Caco-2 (cell line): ENCODE measurements at regions of chr6 and their contacts with region 1.

Region 1: DNA sequence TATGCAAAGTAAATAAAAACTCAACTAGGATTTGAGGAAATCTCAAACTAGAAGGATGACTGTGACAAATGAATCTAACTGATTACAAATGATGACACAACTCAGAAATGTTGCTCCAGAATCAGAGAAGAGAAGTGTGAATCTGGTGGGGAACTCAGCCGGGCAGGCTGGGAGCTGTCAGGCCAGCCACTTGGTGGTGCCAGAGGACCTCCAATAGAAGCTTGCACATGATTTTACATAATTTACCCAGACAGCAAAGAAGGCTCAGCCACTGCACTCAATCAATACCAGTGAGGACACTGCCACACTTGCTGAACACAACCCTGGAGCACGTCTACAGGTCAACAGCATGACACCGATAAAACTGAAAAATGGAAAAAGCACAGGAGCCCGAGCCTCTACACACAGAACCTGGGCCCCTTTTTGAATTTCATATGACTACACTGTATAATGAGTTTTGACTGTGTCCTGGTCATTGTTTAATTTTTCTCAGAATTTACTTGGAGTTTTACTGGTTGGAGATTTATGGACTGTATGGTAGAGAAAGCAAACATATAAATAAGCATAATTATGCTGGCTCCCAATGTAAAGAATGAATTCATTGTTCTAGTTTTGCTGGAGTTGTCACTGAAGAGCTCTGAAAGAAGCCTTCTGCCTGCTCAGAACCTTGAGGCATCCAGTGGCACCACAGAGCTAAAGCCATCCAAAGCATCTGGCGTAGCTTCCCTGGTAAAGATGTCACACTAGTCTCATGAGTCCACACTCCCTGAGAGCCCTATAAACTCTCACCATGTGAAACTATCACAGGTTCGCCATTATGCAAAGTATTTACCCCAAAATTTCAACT is 296.5 kb downstream of the THBS2 start:
- DNase-seq: peak; percentile 63 to 76
- H3K4me3 ChIP-seq: no peak overlapping the region
- H3K4me3 Mint-ChIP-seq: no peak overlapping the region
- H3K27ac Mint-ChIP-seq: no peak overlapping the region
- H3K4me1 ChIP-seq: no peaks in the 10 kb centered on the region
- H3K4me1 Mint-ChIP-seq: no peaks in the 10 kb centered on the region
- H3K27me3 ChIP-seq: no peaks in the 10 kb centered on the region
- H3K27me3 Mint-ChIP-seq: peaks cover 7% of the 10 kb centered on the region
- CTCF ChIP-seq: peak; percentile 67 to 81

Region 2: DNA sequence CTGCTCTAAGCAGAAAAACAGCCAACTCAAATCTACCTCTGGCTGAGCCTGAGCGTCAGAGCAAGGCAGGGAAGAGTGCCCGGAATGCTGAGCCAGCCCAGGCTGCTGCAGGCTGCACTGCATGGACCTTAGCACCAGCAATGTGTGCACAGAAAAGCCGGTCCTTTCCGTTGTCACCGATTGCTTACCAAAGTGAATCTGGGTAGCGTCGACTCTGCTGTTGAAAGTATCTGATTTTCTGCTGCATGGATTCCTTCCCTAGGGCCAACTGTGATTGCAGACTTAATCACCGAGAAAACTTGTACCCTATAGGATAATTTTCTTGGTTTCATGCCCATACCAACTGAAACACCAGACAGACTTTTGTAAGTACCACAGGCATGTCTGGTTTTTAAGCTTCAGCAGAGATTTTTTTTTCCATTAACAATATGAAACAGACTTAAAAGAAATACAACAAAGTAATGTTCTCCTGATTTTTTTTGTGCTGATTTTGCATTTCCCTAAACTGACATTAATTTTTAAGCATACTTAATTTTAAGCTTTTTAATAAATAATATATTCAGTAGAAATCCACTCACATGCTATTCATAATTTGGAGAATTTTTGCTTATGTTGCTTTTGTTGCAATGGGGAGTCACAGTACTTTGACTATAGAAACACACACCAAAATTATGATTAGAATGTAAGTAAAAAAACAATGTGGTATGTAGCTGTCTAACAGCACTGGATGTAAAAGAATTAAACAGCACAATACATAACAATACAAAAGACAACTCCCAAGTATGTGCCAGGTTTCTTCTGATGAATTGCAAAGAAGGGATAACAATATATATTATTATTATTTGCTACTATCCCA is 78.5 kb after region 1 on chr6:
- CTCF ChIA-PET with region 1: no interaction called
- POLR2A ChIA-PET with region 1: no interaction called
- intact Hi-C with region 1: no loop called
- DNase-seq: no peak
- H3K4me3 ChIP-seq: no peak overlapping the region
- H3K4me3 Mint-ChIP-seq: no peak overlapping the region
- H3K27ac Mint-ChIP-seq: no peak overlapping the region
- H3K4me1 ChIP-seq: no peaks in the 10 kb centered on the region
- H3K4me1 Mint-ChIP-seq: no peaks in the 10 kb centered on the region
- H3K27me3 ChIP-seq: no peaks in the 10 kb centered on the region
- H3K27me3 Mint-ChIP-seq: peaks cover 8% of the 10 kb centered on the region
- CTCF ChIP-seq: no peak

Region 3: DNA sequence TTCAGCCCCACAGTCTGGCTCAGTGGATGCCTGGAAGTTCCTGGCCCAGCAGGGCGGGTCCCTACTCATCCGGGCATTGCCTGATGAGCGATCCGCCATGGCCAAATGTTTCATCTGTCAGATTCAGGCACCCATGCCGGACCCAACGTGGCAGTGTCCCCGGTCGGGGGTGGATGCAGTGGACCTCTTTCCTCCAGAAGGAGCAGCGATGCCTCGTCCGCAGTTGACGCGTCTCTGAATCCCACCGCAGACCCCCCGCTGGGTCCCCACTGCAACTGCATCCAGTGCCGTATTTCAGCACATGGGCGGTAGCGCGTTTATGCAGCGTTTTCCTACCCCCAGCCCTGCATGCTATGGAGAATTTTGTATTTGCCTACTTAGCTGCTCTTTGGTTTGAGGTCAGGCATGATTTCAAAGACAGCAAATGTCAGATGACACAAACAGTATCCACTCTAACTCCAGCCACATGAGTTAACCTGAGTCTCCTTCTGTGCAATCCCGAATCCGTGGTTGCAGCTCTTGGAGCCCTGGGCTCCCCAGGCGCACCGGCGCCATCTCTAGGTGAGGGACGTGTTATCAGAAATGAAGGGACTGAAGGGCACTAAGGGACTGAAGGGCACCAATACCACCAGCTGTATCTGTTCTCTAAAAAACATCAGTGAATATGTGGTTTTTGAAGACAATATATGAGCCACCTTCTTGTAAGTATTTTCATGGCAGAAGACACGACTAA is 369.1 kb after region 1 on chr6:
- CTCF ChIA-PET with region 1: no interaction called
- POLR2A ChIA-PET with region 1: no interaction called
- intact Hi-C with region 1: loop called (anchors 10 kb)
- DNase-seq: peak in 1 of 2 experiments; percentile 45
- H3K4me3 ChIP-seq: no peak overlapping the region
- H3K4me3 Mint-ChIP-seq: no peak overlapping the region
- H3K27ac Mint-ChIP-seq: no peak overlapping the region
- H3K4me1 ChIP-seq: no peaks in the 10 kb centered on the region
- H3K4me1 Mint-ChIP-seq: no peaks in the 10 kb centered on the region
- H3K27me3 ChIP-seq: no peaks in the 10 kb centered on the region
- H3K27me3 Mint-ChIP-seq: peaks cover 7% of the 10 kb centered on the region
- CTCF ChIP-seq: peak in 1 of 2 experiments; percentile 15

Region 4: DNA sequence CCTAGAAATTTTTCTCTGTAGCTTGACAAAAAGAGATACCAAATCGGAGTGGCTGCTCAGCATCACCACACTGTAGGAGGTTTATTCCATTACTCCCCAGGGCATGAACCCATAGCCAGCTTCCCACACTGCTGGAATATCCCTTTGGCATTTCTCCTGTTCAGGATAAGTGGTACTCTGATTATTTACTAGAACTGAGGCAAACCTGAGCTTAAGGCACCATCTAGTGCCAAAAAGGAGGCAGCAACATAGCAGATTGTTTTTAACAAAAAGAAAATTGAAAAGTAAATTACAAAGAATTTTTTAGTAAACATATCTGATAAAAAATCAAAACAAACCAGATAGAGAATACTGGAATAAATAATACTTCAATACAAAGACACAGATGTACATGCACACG is 563.0 kb after region 1 on chr6:
- CTCF ChIA-PET with region 1: no interaction called
- POLR2A ChIA-PET with region 1: no interaction called
- intact Hi-C with region 1: loop called (anchors 1 kb)
- DNase-seq: no peak
- H3K4me3 ChIP-seq: no peak overlapping the region
- H3K4me3 Mint-ChIP-seq: no peak overlapping the region
- H3K27ac Mint-ChIP-seq: no peak overlapping the region
- H3K4me1 ChIP-seq: no peaks in the 10 kb centered on the region
- H3K4me1 Mint-ChIP-seq: no peaks in the 10 kb centered on the region
- H3K27me3 ChIP-seq: no peaks in the 10 kb centered on the region
- H3K27me3 Mint-ChIP-seq: no peaks in the 10 kb centered on the region
- CTCF ChIP-seq: no peak

Region 5: GRCh38 chr6:170295510-170296422 is 1338.7 kb after region 1 on chr6:
- CTCF ChIA-PET with region 1: no interaction called
- POLR2A ChIA-PET with region 1: no interaction called
- intact Hi-C with region 1: loop called (anchors 5 kb)
- DNase-seq: peak in 1 of 2 experiments; percentile 53
- H3K4me3 ChIP-seq: peak overlapping the region; percentile 64
- H3K4me3 Mint-ChIP-seq: peak overlapping the region; percentile 78
- H3K27ac Mint-ChIP-seq: no peak overlapping the region
- H3K4me1 ChIP-seq: peaks cover 18% of the 10 kb centered on the region
- H3K4me1 Mint-ChIP-seq: peaks cover 11% of the 10 kb centered on the region
- H3K27me3 ChIP-seq: peaks cover 7% of the 10 kb centered on the region
- H3K27me3 Mint-ChIP-seq: peaks cover 30% of the 10 kb centered on the region
- CTCF ChIP-seq: no peak

Region 6: GRCh38 chr6:170529839-170530469 is 1572.8 kb after region 1 on chr6:
- CTCF ChIA-PET with region 1: no interaction called
- POLR2A ChIA-PET with region 1: no interaction called
- intact Hi-C with region 1: loop called (anchors 5 kb)
- DNase-seq: peak; percentile 69 to 74
- H3K4me3 ChIP-seq: no peak overlapping the region
- H3K4me3 Mint-ChIP-seq: no peak overlapping the region
- H3K27ac Mint-ChIP-seq: no peak overlapping the region
- H3K4me1 ChIP-seq: peaks cover 13% of the 10 kb centered on the region
- H3K4me1 Mint-ChIP-seq: peaks cover under 1% of the 10 kb centered on the region
- H3K27me3 ChIP-seq: no peaks in the 10 kb centered on the region
- H3K27me3 Mint-ChIP-seq: no peaks in the 10 kb centered on the region
- CTCF ChIP-seq: peak; percentile 77 to 91